Cardiac septum (tissue), 1 donor: ENCODE measurements at regions of chr1 and their contacts with region 1.

Region 1: GRCh38 chr1:212162635-212163034 is 122.6 kb upstream of the PPP2R5A start:
- DNase-seq: peak; percentile 82

Region 2: DNA sequence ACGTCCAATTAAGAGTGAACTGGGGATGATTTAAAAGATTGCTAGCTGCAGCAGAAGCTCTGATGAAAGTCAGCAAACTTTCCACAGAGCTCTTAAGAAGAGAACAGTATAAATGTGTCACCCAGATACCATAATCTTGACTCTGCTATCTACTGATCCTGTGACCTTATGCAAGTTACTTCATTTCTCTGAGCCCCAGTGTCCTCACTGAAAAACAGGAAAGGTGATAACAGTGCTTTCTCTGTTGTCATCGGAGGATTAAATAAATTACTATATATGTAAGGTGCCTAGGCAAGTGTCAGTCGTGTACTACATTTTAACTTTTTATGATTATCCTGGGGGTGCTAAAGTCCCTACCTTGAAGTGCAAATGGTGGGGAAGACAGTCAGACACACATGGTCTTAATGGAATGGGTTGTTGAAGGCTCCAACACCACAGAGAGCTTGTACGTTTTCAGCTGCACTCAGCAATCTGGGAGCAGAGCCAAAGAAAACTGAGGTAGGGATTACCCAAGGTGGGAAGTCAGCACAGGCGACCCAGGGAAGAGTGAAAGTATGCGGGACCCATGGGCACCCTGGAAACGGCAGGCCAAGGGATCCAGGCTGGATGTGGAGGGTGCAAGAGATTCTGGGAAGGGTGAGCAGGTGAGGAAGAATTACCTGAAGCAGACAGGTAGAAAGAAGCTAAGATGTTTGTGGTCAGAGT is 44.3 kb before region 1 on chr1:
- intact Hi-C with region 1: loop called (anchors 5 kb)
- DNase-seq: no peak

Region 3: GRCh38 chr1:212203630-212204029 is 41.0 kb after region 1 on chr1:
- intact Hi-C with region 1: loop called (anchors 2 kb)
- DNase-seq: no peak

Region 4: GRCh38 chr1:212234431-212235395 is 72.1 kb after region 1 on chr1:
- intact Hi-C with region 1: loop called (anchors 2 kb)
- DNase-seq: no peak